Activated T-helper 2 cell treated with anti-CD3 and anti-CD28 coated beads, Interferon-gamma antibody, Interleukin-2, Interleukin-4, amounts not matched to agents 10 μg/mL and 5 μg/mL and 100 μg/mL, durations not matched to agents 14 hours and 24 hours and 36 hours (primary cell): ENCODE measurements at regions of chr12 and their contacts with region 1.

Region 1: GRCh38 chr12:24838531-24838950 is 110.4 kb downstream of the BCAT1 start:
- DNase-seq: peak; percentile 13
- H3K4me3 Mint-ChIP-seq: peak overlapping the region; percentile 2
- H3K27ac Mint-ChIP-seq: peak overlapping the region; percentile 77
- H3K4me1 Mint-ChIP-seq: peaks cover 44% of the 10 kb centered on the region
- H3K27me3 Mint-ChIP-seq: no peaks in the 10 kb centered on the region

Region 2: GRCh38 chr12:23204933-23205778 is 1633.4 kb before region 1 on chr12:
- intact Hi-C with region 1: loop called (anchors 2 kb)
- DNase-seq: no peak
- H3K4me3 Mint-ChIP-seq: no peak overlapping the region
- H3K27ac Mint-ChIP-seq: no peak overlapping the region
- H3K4me1 Mint-ChIP-seq: no peaks in the 10 kb centered on the region
- H3K27me3 Mint-ChIP-seq: no peaks in the 10 kb centered on the region

Region 3: GRCh38 chr12:24705741-24706358 is 132.7 kb before region 1 on chr12:
- intact Hi-C with region 1: loop called (anchors 1 kb)
- DNase-seq: no peak
- H3K4me3 Mint-ChIP-seq: no peak overlapping the region
- H3K27ac Mint-ChIP-seq: no peak overlapping the region
- H3K4me1 Mint-ChIP-seq: peaks cover 13% of the 10 kb centered on the region
- H3K27me3 Mint-ChIP-seq: no peaks in the 10 kb centered on the region

Region 4: GRCh38 chr12:24822121-24822899 is 16.2 kb before region 1 on chr12:
- intact Hi-C with region 1: loop called (anchors 1 kb)
- DNase-seq: no peak
- H3K4me3 Mint-ChIP-seq: no peak overlapping the region
- H3K27ac Mint-ChIP-seq: peak overlapping the region; percentile 47
- H3K4me1 Mint-ChIP-seq: peaks cover 20% of the 10 kb centered on the region
- H3K27me3 Mint-ChIP-seq: no peaks in the 10 kb centered on the region

Region 5: DNA sequence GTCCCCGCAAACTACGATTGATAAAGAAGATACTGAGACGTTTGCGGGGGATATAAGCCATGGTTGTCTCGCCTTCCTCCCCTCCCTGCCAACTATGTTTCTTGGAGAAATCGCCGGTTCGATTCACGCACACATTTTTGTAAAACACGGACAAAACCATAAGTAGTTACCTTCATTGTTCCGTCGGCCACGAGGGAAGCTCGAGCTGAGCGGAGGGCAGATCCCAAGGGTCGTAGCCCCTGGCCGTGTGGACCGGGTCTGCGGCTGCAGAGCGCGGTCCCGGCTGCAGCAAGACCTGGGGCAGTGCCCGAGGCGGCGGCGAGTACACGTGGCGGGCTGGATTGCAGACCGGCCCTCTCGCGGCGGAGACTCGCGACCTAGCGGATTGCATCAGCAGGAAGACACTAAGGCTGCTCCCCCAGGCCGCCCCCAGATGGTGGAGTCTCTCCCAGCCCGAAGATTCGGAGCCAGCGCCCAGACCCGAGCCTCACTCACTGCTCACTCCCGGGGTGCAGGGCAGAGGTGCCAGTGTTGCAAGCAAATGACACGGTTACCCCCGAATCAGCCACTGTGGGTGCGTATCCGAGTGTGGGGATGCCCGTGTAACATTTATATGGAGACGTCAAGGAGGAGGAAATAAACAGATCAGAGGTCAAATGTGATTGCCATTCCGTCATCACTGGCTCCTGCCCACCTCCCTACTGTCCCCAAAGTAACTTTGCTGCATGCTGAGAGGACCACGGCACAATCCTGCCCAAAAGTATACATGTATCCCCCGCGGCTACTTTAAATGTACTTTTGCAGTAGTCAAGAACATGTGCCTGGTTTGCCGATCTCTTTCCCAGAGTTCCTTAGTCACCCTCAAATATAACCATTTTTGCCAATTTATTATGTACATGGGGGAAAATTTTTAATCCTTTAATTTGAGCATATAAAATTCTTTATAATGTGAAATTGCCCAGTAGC is 110.5 kb after region 1 on chr12 and contains the start of gene BCAT1:
- intact Hi-C with region 1: loop called (anchors 1 kb)
- DNase-seq: peak; percentile 18
- H3K4me3 Mint-ChIP-seq: peak within 1 kb of the TSS; percentile 82
- H3K27ac Mint-ChIP-seq: peak within 1 kb of the TSS; percentile 72
- H3K4me1 Mint-ChIP-seq: peaks cover 42% of the 10 kb centered on the region
- H3K27me3 Mint-ChIP-seq: peaks cover 45% of the 10 kb centered on the region
- total RNA-seq, gene BCAT1: 12.7 and 12.9 TPM in 2 replicates

Region 6: GRCh38 chr12:25320123-25321006 is 481.8 kb after region 1 on chr12:
- intact Hi-C with region 1: loop called (anchors 5 kb)
- DNase-seq: no peak
- H3K4me3 Mint-ChIP-seq: no peak overlapping the region
- H3K27ac Mint-ChIP-seq: peak overlapping the region; percentile 56
- H3K4me1 Mint-ChIP-seq: peaks cover 46% of the 10 kb centered on the region
- H3K27me3 Mint-ChIP-seq: peaks cover 17% of the 10 kb centered on the region